Head of caudate nucleus (tissue), 42 donors: ENCODE measurements at regions of chr6 and their contacts with region 1.

Region 1: DNA sequence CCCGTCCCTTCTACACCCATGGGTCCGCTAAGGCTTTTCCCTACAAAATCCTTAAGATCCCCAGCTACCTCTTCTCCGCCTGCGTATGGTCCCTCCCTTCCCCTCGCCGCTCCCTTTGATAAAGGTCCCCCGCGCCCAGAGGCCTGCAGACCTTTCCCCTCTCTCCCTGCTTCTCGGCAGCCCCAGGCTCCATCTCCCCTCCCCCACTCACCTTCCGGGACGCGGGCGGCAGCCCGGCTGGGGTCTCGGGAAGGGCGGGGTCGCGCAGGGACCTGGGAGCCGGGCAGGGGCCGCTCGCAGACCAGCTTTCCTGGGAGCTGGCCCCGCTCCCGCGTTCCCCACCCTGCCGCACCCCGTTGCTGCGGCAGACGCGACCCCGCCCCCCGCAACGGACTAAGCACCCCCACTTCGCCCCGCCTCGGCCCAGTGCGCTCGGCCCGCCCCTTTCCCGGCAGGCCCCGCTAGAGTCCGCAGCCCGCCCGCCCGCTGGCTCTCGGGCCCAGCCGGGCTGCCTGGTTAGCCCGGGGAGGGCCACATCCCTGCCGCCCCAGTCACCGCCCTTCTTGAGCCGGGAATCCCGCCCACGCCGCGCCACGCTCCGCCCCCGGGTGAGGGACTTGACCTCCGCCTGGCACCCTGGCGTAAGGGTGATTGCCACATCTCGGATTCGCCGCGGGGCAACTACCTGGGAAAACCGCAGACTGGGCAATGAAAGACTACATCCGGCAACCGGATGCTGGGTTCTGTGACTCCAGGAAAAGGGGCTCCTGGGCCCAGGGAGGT is at the start of gene FLOT1:
- DNase-seq: peak; percentile 82 to 97 (median 93)

Region 2: DNA sequence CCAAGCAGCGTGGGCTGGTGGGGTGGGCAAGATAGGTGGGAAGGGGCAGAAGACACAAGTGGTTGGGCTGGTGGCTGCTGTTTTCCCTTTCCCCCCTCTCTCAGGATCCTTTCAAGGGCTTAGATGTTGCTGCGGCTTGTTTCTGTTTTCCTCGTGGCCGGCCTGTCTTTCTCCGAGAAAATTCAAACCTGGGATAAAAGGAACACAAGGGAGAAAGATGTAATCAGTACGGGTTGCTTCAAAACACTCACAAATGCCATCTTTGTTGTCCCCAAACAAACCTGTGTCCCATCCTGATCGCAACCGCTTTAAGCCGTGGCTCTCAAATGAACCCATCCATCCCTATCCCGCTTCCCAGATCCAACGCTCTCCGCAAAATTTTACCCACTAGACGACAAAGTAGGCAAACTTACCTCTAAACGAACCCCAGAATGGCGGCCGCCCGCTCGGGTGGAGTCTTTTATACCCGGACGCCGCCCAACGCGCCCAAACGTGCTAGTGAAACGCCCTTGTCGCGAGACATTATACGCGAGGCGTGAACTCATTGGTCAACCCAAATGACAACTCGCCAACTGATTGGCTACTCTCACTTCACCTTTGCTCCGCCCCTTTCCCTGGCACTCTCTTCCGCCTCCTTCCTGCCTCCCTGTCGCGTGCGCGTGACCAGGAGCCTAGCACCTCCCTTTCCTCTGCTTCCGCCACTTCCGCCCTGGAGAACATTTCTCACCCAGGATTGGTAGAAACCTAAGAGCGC is 125.5 kb before region 1 on chr6 and contains the start of gene PPP1R10:
- intact Hi-C with region 1: no loop called
- DNase-seq: peak; percentile 96 to 100 (median 99)

Region 3: DNA sequence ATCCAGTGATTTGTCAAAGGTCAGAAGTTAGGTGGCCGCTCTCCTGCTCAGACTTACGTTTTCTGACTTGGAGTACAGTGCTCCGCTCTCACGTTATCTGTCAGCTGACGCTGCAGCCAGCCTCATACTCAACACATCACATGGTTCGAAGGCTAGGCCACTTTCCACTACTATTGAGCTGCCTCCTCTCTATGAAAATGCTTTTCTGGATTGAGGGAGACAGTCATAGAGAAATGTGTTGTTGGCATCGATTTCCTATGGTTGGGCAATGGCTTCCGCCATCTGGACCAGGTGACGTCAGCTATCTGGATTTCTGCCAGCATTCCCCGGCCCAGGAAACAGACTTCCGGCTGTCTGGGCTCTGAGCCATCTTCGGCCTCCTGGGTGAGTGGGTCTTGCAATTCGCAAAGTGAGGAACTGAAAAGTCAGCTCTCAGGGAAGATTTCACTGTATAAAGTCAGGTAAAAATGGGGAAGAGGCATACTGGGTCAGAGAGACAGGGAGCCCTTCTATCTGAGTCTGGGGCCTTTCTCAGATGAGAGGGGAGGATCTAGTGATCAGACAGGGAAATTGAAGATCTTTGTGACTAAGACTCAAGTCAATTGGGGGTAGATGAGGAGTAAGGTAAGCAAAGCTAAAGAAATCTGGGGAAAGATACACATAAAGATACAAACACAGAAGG is 39.4 kb after region 1 on chr6:
- intact Hi-C with region 1: loop called (anchors 5 kb)
- DNase-seq: peak; percentile 67 to 96 (median 88)

Region 4: DNA sequence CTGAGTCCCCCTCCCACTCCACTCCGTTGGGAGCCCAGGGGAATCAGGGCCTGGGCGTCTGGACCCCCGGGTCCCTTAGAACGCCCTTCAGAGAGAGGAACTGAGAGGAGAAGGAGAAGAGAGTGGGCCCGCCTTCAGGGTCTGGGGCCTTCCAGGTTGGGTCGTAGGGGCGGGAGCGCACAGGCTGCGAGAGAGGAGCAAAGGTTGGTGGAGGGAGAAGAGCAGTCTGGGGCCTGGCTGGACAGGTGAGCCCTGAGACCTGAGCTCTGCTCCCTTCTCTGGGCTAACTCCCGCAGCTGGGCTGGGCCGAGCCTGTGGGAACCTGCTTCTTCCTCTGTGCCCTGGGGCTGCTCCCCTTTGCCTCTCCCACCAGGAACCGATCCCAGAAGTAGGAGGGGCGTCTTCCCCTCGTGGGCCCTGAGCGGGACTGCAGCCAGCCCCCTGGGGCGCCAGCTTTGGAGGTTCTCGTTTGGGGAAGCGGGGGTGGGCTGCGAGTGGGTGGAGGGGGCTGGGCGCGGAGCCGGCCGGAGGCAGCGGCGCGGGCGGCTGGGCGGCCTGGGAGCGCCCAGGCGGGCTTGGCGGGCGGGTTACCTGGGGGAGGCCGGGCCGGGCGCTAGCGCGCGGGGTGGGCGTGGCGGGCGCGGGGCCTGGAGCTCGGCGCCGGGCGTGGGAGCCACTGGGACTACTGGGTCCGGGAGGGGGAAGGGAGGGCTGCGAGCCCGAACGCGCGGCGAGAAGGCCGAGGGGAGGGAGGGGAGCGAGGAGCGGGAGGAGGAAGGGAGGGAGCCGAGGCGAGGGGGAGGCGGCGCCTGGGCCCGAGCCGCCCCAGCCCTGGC is 141.4 kb after region 1 on chr6 and contains the start of gene DDR1:
- intact Hi-C with region 1: loop called (anchors 10 kb)
- DNase-seq: peak; percentile 40 to 96 (median 88)